Esophagus squamous epithelium (tissue), 5 donors: ENCODE measurements at regions of chr20 and their contacts with region 1.

Region 1: GRCh38 chr20:8043687-8044282 is 24.2 kb upstream of the TMX4 start:
- DNase-seq: no peak
- H3K4me3 ChIP-seq: no peak overlapping the region
- H3K27ac ChIP-seq: no peak overlapping the region
- H3K4me1 ChIP-seq: no peaks in the 10 kb centered on the region
- H3K27me3 ChIP-seq: no peaks in the 10 kb centered on the region
- CTCF ChIP-seq: peak; percentile 40 to 71 (median 68)
- POLR2A ChIP-seq: no peak

Region 2: DNA sequence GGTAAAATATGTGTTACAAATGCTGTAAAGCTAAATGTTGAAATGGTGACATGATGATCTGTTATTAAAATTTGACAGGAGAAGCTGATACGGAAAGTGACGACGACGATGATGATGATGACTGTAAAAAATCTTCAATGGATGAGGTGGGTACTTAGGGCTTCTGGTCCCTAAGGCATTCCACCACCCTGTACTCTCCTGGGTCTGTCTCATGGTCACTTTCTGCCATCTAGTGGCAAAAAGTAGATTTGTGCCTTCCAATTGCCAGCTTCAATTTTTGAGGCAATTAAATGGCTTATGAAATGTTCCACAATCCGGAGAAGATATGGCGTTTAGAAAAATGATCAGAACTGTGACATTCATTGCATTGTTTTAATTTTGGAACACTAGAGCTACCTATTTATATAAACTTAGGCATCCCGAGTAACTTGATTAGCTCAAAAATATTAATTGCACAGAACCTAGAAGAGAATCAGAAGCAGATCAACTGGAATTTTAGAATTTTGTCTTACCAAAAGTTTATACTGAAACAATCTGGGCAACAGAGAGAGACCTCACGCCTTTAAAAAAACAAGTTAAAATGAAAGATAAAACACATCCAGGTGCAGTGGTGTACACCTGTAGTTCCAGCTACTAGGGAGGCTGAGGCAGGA is 678.6 kb after region 1 on chr20:
- intact Hi-C with region 1: loop called (anchors 5 kb)
- DNase-seq: no peak
- H3K4me3 ChIP-seq: no peak overlapping the region
- H3K27ac ChIP-seq: no peak overlapping the region
- H3K4me1 ChIP-seq: no peaks in the 10 kb centered on the region
- H3K27me3 ChIP-seq: no peaks in the 10 kb centered on the region
- CTCF ChIP-seq: peak; percentile 35 to 74 (median 70)
- POLR2A ChIP-seq: no peak